ENCODE measurements at regions of chr10 and their contacts with region 1.

Region 1: GRCh38 chr10:113087165-113088029 is 137.3 kb downstream of the TCF7L2 start:
- H3K4me3 ChIP-seq: no peak overlapping the region
- H3K27ac ChIP-seq: peak overlapping the region; percentile 6; the same call in 1 of the 2 replicates
- H3K4me1 ChIP-seq: peaks cover 8% of the 10 kb centered on the region
- CTCF ChIP-seq: no peak

Region 2: DNA sequence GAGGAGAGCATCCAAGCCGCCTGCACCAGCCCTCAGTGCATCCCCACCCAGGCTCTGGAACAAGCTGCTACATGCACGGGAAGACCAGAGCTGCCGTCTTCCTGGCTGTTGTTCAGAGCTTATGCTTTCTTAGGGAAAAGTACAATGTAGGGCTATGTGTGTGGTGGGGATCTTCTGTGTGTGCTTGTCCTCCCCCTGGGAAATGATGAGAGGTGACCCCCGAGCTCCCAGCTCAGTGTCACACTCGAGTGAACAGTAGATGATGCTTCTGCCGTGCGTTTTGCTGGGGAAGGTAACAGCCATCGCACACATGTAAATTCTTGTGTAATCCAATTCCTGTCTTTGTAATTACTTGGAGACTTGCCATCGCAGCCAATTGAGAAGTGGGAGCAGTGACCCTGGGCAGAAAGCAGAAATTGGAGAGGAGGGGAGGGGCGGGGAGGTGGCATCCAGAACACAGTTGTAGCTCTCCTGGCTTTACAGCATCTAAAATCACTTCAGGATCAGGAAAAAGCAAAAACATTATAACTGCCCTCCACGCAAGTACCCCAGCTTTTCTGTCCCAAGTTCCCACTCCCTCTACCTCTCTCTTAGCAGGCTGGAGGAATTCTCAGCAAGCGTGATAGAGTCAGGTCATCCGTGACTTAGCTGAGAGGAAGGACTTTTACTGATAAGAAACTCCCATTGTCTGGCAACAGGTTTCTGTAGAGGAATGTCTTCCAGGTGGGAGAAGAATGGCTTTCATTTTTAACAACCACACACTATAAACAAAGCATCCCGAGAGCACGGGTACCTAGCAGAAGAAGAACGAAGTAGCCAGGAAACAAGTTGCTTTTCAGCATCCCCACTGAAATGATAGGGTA is 12.3 kb after region 1 on chr10:
- CTCF ChIA-PET with region 1: interaction called, 5 read pairs
- POLR2A ChIA-PET with region 1: interaction called, 10 read pairs
- H3K4me3 ChIP-seq: no peak overlapping the region; the same call in 1 of the 2 replicates
- H3K27ac ChIP-seq: peak overlapping the region; percentile 67
- H3K4me1 ChIP-seq: peaks cover 15% of the 10 kb centered on the region
- CTCF ChIP-seq: no peak

Measured in HEK293 (cell line).